CD8-positive, alpha-beta T cell (primary cell): ENCODE measurements at regions of chr1 and their contacts with region 1.

Region 1: DNA sequence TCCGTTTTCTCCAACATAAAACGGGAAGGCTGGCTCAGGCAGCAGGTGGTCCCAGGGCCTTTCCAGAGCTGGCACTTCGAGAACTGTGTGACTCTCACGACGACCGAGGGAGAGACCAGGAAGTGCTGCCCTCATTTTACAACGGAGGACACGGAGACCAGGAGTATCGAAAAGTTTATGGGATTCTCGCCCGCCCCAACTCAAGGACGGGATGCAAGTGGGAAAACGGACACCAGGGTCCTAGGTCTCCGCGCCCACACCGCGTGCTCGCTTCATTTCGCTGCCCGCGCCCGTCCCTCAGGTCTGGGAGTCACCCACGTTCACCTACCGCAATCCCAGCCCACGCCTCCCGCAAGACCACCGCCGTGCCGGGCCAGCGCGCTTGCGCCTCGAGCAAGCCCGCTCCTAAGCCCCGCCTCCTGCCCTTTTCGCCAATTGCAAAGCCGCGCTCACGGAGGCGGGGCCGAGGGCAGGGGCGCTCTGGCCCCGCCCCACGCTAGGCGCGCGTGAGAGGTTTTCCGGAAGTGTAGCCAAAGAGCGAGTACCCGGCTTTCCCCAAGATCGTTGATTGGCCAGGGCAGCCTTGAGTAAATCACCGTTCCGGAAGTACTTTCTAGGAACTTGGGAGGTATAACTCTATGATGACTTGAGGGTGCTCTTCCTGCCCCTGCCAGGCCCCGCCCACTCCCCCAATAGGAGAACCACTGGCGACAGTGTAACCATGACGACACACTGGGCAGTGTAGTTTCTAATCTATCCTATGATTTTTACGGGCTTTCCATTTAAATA is at the start of gene PARS2:
- DNase-seq: peak; percentile 86 to 99 (median 95)
- ATAC-seq: peak; percentile 93
- H3K4me3 ChIP-seq: peak within 1 kb of the TSS; percentile 87 to 97
- H3K4me3 Mint-ChIP-seq: peak within 1 kb of the TSS; percentile 96
- H3K27ac ChIP-seq: peak within 1 kb of the TSS; percentile 62 to 65
- H3K27ac Mint-ChIP-seq: peak within 1 kb of the TSS; percentile 91
- H3K4me1 ChIP-seq: peaks cover 10% of the 10 kb centered on the region
- H3K4me1 Mint-ChIP-seq: peaks cover 20% of the 10 kb centered on the region
- H3K27me3 ChIP-seq: no peaks in the 10 kb centered on the region
- H3K27me3 Mint-ChIP-seq: no peaks in the 10 kb centered on the region
- CTCF ChIP-seq: no peak
- total RNA-seq, gene PARS2: not detected

Region 2: GRCh38 chr1:53014791-53015507 is 1749.4 kb before region 1 on chr1:
- CTCF ChIA-PET with region 1: no interaction called
- POLR2A ChIA-PET with region 1: no interaction called
- intact Hi-C with region 1: loop called in 1 of 2 experiments (anchors 10 kb)
- DNase-seq: peak; percentile 51 to 94 (median 79)
- ATAC-seq: peak; percentile 100
- H3K4me3 ChIP-seq: peak overlapping the region; percentile 67 to 68
- H3K4me3 Mint-ChIP-seq: peak overlapping the region; percentile 84
- H3K27ac ChIP-seq: peak overlapping the region; percentile 42 to 48
- H3K27ac Mint-ChIP-seq: peak overlapping the region; percentile 79
- H3K4me1 ChIP-seq: peaks cover 21% of the 10 kb centered on the region
- H3K4me1 Mint-ChIP-seq: peaks cover 38% of the 10 kb centered on the region
- H3K27me3 ChIP-seq: no peaks in the 10 kb centered on the region
- H3K27me3 Mint-ChIP-seq: no peaks in the 10 kb centered on the region
- CTCF ChIP-seq: no peak

Region 3: GRCh38 chr1:53837924-53838652 is 926.2 kb before region 1 on chr1 and contains the start of gene NDC1:
- CTCF ChIA-PET with region 1: no interaction called
- POLR2A ChIA-PET with region 1: no interaction called
- intact Hi-C with region 1: loop called in 1 of 2 experiments (anchors 2 kb)
- DNase-seq: peak; percentile 77 to 96 (median 88)
- ATAC-seq: peak; percentile 90
- H3K4me3 ChIP-seq: peak within 1 kb of the TSS; percentile 82 to 93
- H3K4me3 Mint-ChIP-seq: peak within 1 kb of the TSS; percentile 91
- H3K27ac ChIP-seq: peak within 1 kb of the TSS; percentile 91 to 100
- H3K27ac Mint-ChIP-seq: peak within 1 kb of the TSS; percentile 98
- H3K4me1 ChIP-seq: peaks cover 16% of the 10 kb centered on the region
- H3K4me1 Mint-ChIP-seq: peaks cover 26% of the 10 kb centered on the region
- H3K27me3 ChIP-seq: no peaks in the 10 kb centered on the region
- H3K27me3 Mint-ChIP-seq: peaks cover 3% of the 10 kb centered on the region
- CTCF ChIP-seq: no peak
- total RNA-seq, gene NDC1: 6.1 to 6.6 TPM

Region 4: GRCh38 chr1:54199765-54200518 is 564.4 kb before region 1 on chr1 and contains the starts of genes CYB5RL and MRPL37:
- CTCF ChIA-PET with region 1: no interaction called
- POLR2A ChIA-PET with region 1: no interaction called
- intact Hi-C with region 1: loop called in 1 of 2 experiments (anchors 1 kb)
- DNase-seq: peak; percentile 74 to 96 (median 89)
- ATAC-seq: peak; percentile 97
- H3K4me3 ChIP-seq: peak within 1 kb of the TSS; percentile 59 to 93
- H3K4me3 Mint-ChIP-seq: peak within 1 kb of the TSS; percentile 94
- H3K27ac ChIP-seq: peak within 1 kb of the TSS; percentile 60 to 75
- H3K27ac Mint-ChIP-seq: peak within 1 kb of the TSS; percentile 84
- H3K4me1 ChIP-seq: peaks cover 19% of the 10 kb centered on the region
- H3K4me1 Mint-ChIP-seq: peaks cover 43% of the 10 kb centered on the region
- H3K27me3 ChIP-seq: no peaks in the 10 kb centered on the region
- H3K27me3 Mint-ChIP-seq: no peaks in the 10 kb centered on the region
- CTCF ChIP-seq: no peak
- total RNA-seq, gene CYB5RL: 2.1 to 3.0 TPM
- total RNA-seq, gene MRPL37: 27.4 to 29.8 TPM

Region 5: DNA sequence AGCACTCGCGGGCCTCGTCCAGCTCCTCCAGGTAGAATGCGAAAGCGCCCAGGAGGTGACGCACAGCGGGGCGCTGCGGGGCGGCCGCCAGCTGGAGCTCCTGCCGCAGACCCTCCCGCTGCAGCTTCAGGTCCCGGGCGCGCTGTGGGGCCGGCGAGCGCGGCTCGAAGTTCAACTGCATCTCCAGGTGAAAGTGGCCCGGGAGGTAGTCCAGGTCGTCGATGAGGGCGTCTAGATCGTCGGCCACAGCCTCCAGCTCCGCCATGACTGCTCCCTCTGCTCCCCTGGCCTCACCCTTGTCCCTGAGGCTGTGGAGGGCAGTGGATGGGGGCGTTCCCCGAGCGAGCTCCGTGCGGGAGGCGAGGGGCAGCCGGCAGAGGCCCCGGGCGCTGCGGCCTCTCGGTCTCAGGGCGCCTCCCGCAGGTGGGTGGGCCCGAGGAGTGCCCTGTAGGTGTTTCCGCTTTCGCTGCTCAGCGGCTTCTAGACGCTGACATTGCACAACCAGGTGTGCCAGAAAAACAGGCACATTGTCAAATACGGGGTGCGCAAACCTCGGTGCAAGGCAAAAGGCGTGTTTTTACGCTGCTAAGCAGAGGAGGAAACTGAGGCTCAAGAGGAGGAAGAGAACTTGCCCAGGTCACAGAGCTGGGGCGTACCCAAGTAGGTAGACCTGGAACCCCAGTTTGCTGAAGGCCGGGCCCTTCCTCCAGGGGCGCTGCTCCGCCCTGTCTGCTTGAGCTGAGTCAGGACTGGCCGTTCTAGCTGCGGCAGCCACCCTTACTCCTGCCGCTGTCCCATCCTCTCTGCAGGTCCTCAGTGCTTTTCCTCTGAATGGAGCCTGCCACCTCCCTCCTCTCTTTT is 36.8 kb after region 1 on chr1 and contains the start of gene TTC22:
- CTCF ChIA-PET with region 1: interaction called, 7 read pairs
- POLR2A ChIA-PET with region 1: interaction called, 7 read pairs
- intact Hi-C with region 1: loop called (anchors 1 kb)
- DNase-seq: peak; percentile 39 to 84 (median 72)
- ATAC-seq: peak; percentile 81
- H3K4me3 ChIP-seq: peak within 1 kb of the TSS; percentile 59 to 79
- H3K4me3 Mint-ChIP-seq: peak within 1 kb of the TSS; percentile 97
- H3K27ac ChIP-seq: peak within 1 kb of the TSS; percentile 38 to 74
- H3K27ac Mint-ChIP-seq: peak within 1 kb of the TSS; percentile 93
- H3K4me1 ChIP-seq: peaks cover 37% of the 10 kb centered on the region
- H3K4me1 Mint-ChIP-seq: peaks cover 58% of the 10 kb centered on the region
- H3K27me3 ChIP-seq: no peaks in the 10 kb centered on the region
- H3K27me3 Mint-ChIP-seq: no peaks in the 10 kb centered on the region
- CTCF ChIP-seq: peak; percentile 54
- total RNA-seq, gene TTC22: 3.1 to 4.2 TPM

Region 6: GRCh38 chr1:54886724-54887664 is 122.7 kb after region 1 on chr1 and contains the start of gene DHCR24:
- CTCF ChIA-PET with region 1: no interaction called
- POLR2A ChIA-PET with region 1: no interaction called
- intact Hi-C with region 1: loop called in 1 of 2 experiments (anchors 2 kb)
- DNase-seq: peak; percentile 25 to 83 (median 61)
- ATAC-seq: peak; percentile 84
- H3K4me3 ChIP-seq: peak within 1 kb of the TSS; percentile 55 to 62
- H3K4me3 Mint-ChIP-seq: peak within 1 kb of the TSS; percentile 96
- H3K27ac ChIP-seq: peak within 1 kb of the TSS in 1 of 2 experiments; percentile 11
- H3K27ac Mint-ChIP-seq: peak within 1 kb of the TSS; percentile 76
- H3K4me1 ChIP-seq: peaks cover 11% of the 10 kb centered on the region
- H3K4me1 Mint-ChIP-seq: peaks cover 29% of the 10 kb centered on the region
- H3K27me3 ChIP-seq: peaks cover 0 to 3% of the 10 kb centered on the region in 2 experiments
- H3K27me3 Mint-ChIP-seq: peaks cover 2% of the 10 kb centered on the region
- CTCF ChIP-seq: no peak
- total RNA-seq, gene DHCR24: 1.6 to 1.9 TPM